Activated CD4-positive, alpha-beta memory T cell treated with anti-CD3 and anti-CD28 coated beads for 36 hours (primary cell): ENCODE measurements at regions of chr9 and their contacts with region 1.

Region 1: GRCh38 chr9:98974994-98975712 is 31.4 kb downstream of the COL15A1 start:
- DNase-seq: peak; percentile 87
- H3K4me3 Mint-ChIP-seq: no peak overlapping the region
- H3K27ac Mint-ChIP-seq: no peak overlapping the region
- H3K4me1 Mint-ChIP-seq: peaks cover 6% of the 10 kb centered on the region
- H3K27me3 Mint-ChIP-seq: peaks cover 8% of the 10 kb centered on the region

Region 2: GRCh38 chr9:98807070-98807810 is 167.9 kb before region 1 on chr9 and contains the start of gene GALNT12:
- CTCF ChIA-PET with region 1: interaction called, 3 read pairs
- POLR2A ChIA-PET with region 1: no interaction called
- intact Hi-C with region 1: loop called (anchors 2 kb)
- DNase-seq: peak; percentile 64
- H3K4me3 Mint-ChIP-seq: peak within 1 kb of the TSS; percentile 76
- H3K27ac Mint-ChIP-seq: no peak within 1 kb of the TSS
- H3K4me1 Mint-ChIP-seq: peaks cover 35% of the 10 kb centered on the region
- H3K27me3 Mint-ChIP-seq: peaks cover 4% of the 10 kb centered on the region
- total RNA-seq, gene GALNT12: 6.3 to 7.9 TPM

Region 3: GRCh38 chr9:98958271-98958984 is 16.7 kb before region 1 on chr9:
- CTCF ChIA-PET with region 1: interaction called, 15 read pairs
- POLR2A ChIA-PET with region 1: no interaction called
- intact Hi-C with region 1: no loop called
- DNase-seq: no peak
- H3K4me3 Mint-ChIP-seq: no peak overlapping the region
- H3K27ac Mint-ChIP-seq: no peak overlapping the region
- H3K4me1 Mint-ChIP-seq: no peaks in the 10 kb centered on the region
- H3K27me3 Mint-ChIP-seq: peaks cover 6% of the 10 kb centered on the region

Region 4: DNA sequence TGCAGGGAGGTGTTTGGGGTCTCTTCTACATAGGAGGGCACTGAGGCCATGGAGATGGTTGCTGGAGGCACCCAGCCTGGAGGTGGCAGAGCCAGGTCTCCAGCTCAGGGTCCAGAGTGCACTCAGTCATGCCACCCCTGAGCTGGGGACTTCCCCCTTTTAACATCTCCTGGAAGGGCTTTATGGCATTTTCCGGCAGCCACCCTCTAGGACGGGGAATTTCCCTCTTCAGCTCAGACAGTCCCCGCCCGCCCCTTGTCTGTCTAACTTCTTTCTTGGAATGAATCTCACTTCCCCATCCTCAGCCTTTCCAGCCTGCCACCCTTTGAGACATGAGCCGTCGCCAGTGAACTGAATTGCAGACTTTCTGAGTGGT is 18.4 kb after region 1 on chr9:
- CTCF ChIA-PET with region 1: interaction called, 63 read pairs
- POLR2A ChIA-PET with region 1: no interaction called
- intact Hi-C with region 1: loop called (anchors 1 kb)
- DNase-seq: peak; percentile 87
- H3K4me3 Mint-ChIP-seq: no peak overlapping the region
- H3K27ac Mint-ChIP-seq: peak overlapping the region; percentile 39
- H3K4me1 Mint-ChIP-seq: peaks cover 16% of the 10 kb centered on the region
- H3K27me3 Mint-ChIP-seq: peaks cover 8% of the 10 kb centered on the region

Region 5: GRCh38 chr9:98998441-98999151 is 23.4 kb after region 1 on chr9:
- CTCF ChIA-PET with region 1: interaction called, 63 read pairs
- POLR2A ChIA-PET with region 1: no interaction called
- intact Hi-C with region 1: loop called (anchors 1 kb)
- DNase-seq: peak; percentile 73
- H3K4me3 Mint-ChIP-seq: no peak overlapping the region
- H3K27ac Mint-ChIP-seq: no peak overlapping the region
- H3K4me1 Mint-ChIP-seq: peaks cover 23% of the 10 kb centered on the region
- H3K27me3 Mint-ChIP-seq: peaks cover 7% of the 10 kb centered on the region

Region 6: GRCh38 chr9:99012942-99013512 is 37.9 kb after region 1 on chr9:
- CTCF ChIA-PET with region 1: interaction called, 31 read pairs
- POLR2A ChIA-PET with region 1: no interaction called
- intact Hi-C with region 1: no loop called
- DNase-seq: peak; percentile 32
- H3K4me3 Mint-ChIP-seq: no peak overlapping the region
- H3K27ac Mint-ChIP-seq: peak overlapping the region; percentile 55
- H3K4me1 Mint-ChIP-seq: peaks cover 18% of the 10 kb centered on the region
- H3K27me3 Mint-ChIP-seq: no peaks in the 10 kb centered on the region

Region 7: GRCh38 chr9:99140685-99141314 is 165.6 kb after region 1 on chr9:
- CTCF ChIA-PET with region 1: interaction called, 80 read pairs
- POLR2A ChIA-PET with region 1: no interaction called
- intact Hi-C with region 1: loop called (anchors 1 kb)
- DNase-seq: peak; percentile 51
- H3K4me3 Mint-ChIP-seq: no peak overlapping the region
- H3K27ac Mint-ChIP-seq: no peak overlapping the region
- H3K4me1 Mint-ChIP-seq: peaks cover 25% of the 10 kb centered on the region
- H3K27me3 Mint-ChIP-seq: no peaks in the 10 kb centered on the region